K562 (cell line): ENCODE measurements at regions of chr1 and their contacts with region 1.

Region 1: GRCh38 chr1:95287081-95287480 is 53.1 kb downstream of the RWDD3 start:
- DNase-seq: peak in 1 of 4 experiments; percentile 22
- ATAC-seq: peak; percentile 60; the same call in 2 of the 3 replicates
- H3K4me3 ChIP-seq: no peak overlapping the region
- H3K27ac ChIP-seq: no peak overlapping the region
- H3K4me1 ChIP-seq: no peaks in the 10 kb centered on the region
- H3K27me3 ChIP-seq: no peaks in the 10 kb centered on the region
- CTCF ChIP-seq: peak in 1 of 3 experiments; percentile 12; a peak in 1 of 6 replicates
- EP300 ChIP-seq: no peak
- POLR2A ChIP-seq: no peak
- RAD21 ChIP-seq: peak in 1 of 2 experiments; percentile 26; a peak in 2 of 4 replicates

Region 2: GRCh38 chr1:95304803-95305202 is 17.7 kb after region 1 on chr1:
- CTCF ChIA-PET with region 1: no interaction called
- POLR2A ChIA-PET with region 1: no interaction called
- in situ Hi-C with region 1: no loop called
- intact Hi-C with region 1: no loop called
- DNase-seq: no peak
- ATAC-seq: no peak
- H3K4me3 ChIP-seq: no peak overlapping the region
- H3K27ac ChIP-seq: no peak overlapping the region
- H3K4me1 ChIP-seq: no peaks in the 10 kb centered on the region
- H3K27me3 ChIP-seq: no peaks in the 10 kb centered on the region; a peak in 1 of 5 replicates
- CTCF ChIP-seq: no peak
- EP300 ChIP-seq: no peak
- POLR2A ChIP-seq: no peak
- RAD21 ChIP-seq: no peak

Region 3: DNA sequence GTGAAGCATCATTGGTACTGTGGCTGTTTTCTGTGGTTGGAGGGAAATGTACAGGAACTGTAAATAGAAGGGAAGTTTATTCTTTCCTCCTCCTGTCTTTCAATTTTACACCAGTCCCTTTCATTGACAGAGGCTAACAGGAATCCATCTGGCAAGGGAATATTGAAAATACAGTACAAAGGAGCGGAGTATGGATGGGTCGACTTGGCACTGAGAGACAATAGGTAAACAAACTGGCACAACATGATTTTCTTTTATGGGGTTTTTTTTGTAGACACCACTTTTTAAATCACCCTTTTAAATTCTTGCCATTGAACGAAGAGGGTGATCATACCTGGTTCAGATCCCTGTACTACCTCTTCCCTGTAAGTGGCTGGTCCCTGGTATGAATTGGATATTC is 288.2 kb after region 1 on chr1:
- CTCF ChIA-PET with region 1: no interaction called
- POLR2A ChIA-PET with region 1: no interaction called
- in situ Hi-C with region 1: no loop called
- intact Hi-C with region 1: no loop called
- DNase-seq: no peak
- ATAC-seq: no peak
- H3K4me3 ChIP-seq: no peak overlapping the region
- H3K27ac ChIP-seq: no peak overlapping the region
- H3K4me1 ChIP-seq: no peaks in the 10 kb centered on the region
- H3K27me3 ChIP-seq: no peaks in the 10 kb centered on the region
- CTCF ChIP-seq: no peak
- EP300 ChIP-seq: no peak
- POLR2A ChIP-seq: no peak
- RAD21 ChIP-seq: no peak

Region 4: GRCh38 chr1:96710708-96711477 is 1423.8 kb after region 1 on chr1:
- CTCF ChIA-PET with region 1: no interaction called
- POLR2A ChIA-PET with region 1: no interaction called
- in situ Hi-C with region 1: no loop called
- intact Hi-C with region 1: loop called (anchors 10 kb)
- DNase-seq: no peak
- ATAC-seq: peak; percentile 51
- H3K4me3 ChIP-seq: no peak overlapping the region
- H3K27ac ChIP-seq: no peak overlapping the region; the same call in 2 of the 3 replicates
- H3K4me1 ChIP-seq: no peaks in the 10 kb centered on the region; a peak in 1 of 5 replicates
- H3K27me3 ChIP-seq: no peaks in the 10 kb centered on the region; a peak in 1 of 5 replicates
- CTCF ChIP-seq: no peak
- EP300 ChIP-seq: no peak
- POLR2A ChIP-seq: no peak
- RAD21 ChIP-seq: no peak